Sciatic nerve (tissue), 2 donors: ENCODE measurements at regions of chr18 and their contacts with region 1.

Region 1: DNA sequence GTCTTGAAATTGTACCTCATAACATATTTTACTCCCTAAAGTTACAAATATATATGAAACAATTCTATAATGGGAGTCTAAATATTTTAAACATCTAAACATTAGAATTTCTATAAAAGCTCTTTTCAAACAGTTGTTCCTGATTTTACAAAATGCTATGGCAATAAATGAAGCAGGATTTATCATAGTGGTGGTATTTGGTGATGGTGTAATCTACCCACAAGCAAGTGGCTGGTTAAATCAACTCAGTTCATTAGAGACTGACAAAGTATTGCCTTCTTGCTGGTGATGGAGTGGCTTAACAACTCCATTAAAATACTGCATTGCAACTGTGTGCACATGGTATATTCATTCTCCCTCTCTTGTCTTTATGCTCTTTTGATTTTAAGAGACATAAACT is 138.9 kb downstream of the PMAIP1 start:
- DNase-seq: no peak
- ATAC-seq: no peak

Region 2: GRCh38 chr18:59469463-59470180 is 569.1 kb before region 1 on chr18:
- intact Hi-C with region 1: loop called (anchors 5 kb)
- DNase-seq: no peak
- ATAC-seq: no peak

Region 3: DNA sequence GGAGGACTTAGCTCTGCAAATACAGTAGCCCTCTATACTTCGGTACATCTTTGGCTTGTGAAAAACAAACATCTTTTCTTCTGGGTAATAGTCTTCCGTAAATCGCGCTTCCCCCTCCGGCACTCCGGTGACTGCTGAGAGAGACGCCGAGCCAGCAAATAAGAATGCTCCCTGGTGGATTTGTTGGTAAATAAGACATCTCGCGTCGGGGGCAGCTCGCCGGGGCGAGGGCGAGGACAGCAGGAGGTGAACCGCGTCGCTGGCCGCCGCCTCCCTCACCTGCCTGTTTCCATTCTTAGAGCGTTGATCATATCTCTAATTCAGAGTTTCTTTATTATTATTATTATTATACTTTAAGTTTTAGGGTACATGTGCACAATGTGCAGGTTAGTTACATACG is 21.4 kb before region 1 on chr18:
- intact Hi-C with region 1: no loop called
- DNase-seq: no peak
- ATAC-seq: no peak